HAP-1 (cell line): ENCODE measurements at regions of chr5 and their contacts with region 1.

Region 1: DNA sequence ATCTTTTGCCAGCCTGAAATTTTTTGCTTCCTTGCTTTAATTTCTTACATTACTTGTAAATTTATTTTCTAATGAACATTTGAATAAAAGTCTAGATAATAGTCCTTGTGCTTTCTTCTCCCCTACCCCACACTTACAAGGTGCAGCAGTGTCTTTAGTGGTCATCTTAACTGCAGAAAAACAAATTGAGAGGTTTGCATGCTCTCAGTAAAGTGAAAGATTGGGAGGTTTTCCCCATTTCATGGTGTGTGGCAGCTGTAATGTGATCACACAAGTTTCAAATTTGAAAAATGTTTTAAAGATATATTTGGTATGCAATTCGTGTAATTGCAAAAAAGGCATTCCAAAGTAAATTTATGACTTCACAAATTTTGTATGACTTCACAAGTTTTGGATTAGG is 14.7 kb downstream of the APC start:
- DNase-seq: no peak
- H3K4me3 ChIP-seq: no peak overlapping the region
- H3K4me1 ChIP-seq: peaks cover 8% of the 10 kb centered on the region
- H3K27me3 ChIP-seq: no peaks in the 10 kb centered on the region

Region 2: DNA sequence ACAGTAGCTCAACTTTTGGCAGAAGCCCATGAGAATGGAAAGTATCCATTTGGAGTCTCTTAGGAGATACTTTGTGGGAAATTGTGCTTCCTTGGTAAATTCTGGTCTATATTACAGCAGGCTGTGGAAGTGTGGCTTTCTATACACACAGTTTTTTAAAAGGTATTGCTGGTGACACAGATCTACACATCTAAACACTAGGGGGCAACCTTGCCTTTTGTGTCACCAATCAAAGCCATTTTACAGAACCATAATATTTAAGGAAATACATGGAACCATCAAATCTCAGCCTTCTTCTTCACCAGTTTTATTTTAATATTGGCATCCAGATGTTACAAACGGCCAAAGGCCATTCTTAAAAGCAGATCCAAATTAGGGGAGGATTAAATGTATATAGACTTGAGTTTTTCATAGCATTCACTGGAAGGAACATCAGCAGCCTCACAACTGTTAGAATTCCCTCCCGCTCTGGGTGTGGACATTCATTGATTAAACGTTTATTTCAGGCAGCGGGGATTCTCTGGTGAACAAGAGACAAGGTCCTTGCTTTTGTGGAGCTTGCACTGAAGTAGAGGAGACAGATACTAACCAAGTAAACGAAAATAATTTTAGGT is 200.8 kb before region 1 on chr5:
- in situ Hi-C with region 1: loop called (anchors 5 kb)
- DNase-seq: peak; percentile 53 to 64
- H3K4me3 ChIP-seq: no peak overlapping the region
- H3K4me1 ChIP-seq: no peaks in the 10 kb centered on the region
- H3K27me3 ChIP-seq: peaks cover 5% of the 10 kb centered on the region; the same call in 1 of the 2 replicates

Region 3: DNA sequence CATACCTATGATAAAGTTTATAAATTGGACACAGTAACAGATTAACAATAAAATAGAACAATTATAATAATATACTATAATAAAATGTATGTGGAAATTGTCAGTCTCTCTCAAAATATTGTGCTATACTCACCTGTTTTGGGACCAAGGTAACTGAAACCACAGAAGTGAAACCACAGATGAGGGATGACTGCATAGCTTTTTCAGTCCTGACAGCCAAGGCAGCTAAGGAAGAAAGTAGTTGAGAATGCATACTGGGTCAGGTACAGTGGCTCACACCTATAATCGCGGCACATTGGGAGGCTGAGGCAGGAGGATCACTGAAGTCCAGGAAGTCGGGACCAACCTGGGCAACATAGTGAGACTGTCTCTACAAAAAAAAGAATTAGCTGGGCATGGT is 117.6 kb after region 1 on chr5:
- in situ Hi-C with region 1: no loop called
- DNase-seq: no peak
- H3K4me3 ChIP-seq: no peak overlapping the region
- H3K4me1 ChIP-seq: no peaks in the 10 kb centered on the region
- H3K27me3 ChIP-seq: no peaks in the 10 kb centered on the region